Activated CD4-positive, alpha-beta T cell treated with anti-CD3 and anti-CD28 coated beads, Interleukin-2, amount 10 ng/mL, durations not matched to agents 24 days and 14 days (primary cell): ENCODE measurements at regions of chr10 and their contacts with region 1.

Region 1: GRCh38 chr10:11631890-11632587 is 20.6 kb upstream of the USP6NL start:
- DNase-seq: peak; percentile 81
- H3K4me3 Mint-ChIP-seq: peak overlapping the region; percentile 27
- H3K27ac Mint-ChIP-seq: peak overlapping the region; percentile 22
- H3K4me1 Mint-ChIP-seq: peaks cover 6% of the 10 kb centered on the region
- H3K27me3 Mint-ChIP-seq: peaks cover 49% of the 10 kb centered on the region

Region 2: GRCh38 chr10:11586170-11586569 is 45.9 kb before region 1 on chr10:
- intact Hi-C with region 1: loop called (anchors 10 kb)
- DNase-seq: no peak
- H3K4me3 Mint-ChIP-seq: no peak overlapping the region
- H3K27ac Mint-ChIP-seq: no peak overlapping the region
- H3K4me1 Mint-ChIP-seq: peaks cover 8% of the 10 kb centered on the region
- H3K27me3 Mint-ChIP-seq: peaks cover 6% of the 10 kb centered on the region

Region 3: GRCh38 chr10:11713186-11713743 is 81.2 kb after region 1 on chr10:
- intact Hi-C with region 1: loop called (anchors 1 kb)
- DNase-seq: no peak
- H3K4me3 Mint-ChIP-seq: no peak overlapping the region
- H3K27ac Mint-ChIP-seq: no peak overlapping the region
- H3K4me1 Mint-ChIP-seq: peaks cover 18% of the 10 kb centered on the region
- H3K27me3 Mint-ChIP-seq: peaks cover 71% of the 10 kb centered on the region